PC-9 (cell line): ENCODE measurements at regions of chr2 and their contacts with region 1.

Region 1: GRCh38 chr2:235827585-235827992 is 333.7 kb downstream of the AGAP1 start:
- DNase-seq: peak; percentile 83 to 87
- H3K4me3 ChIP-seq: no peak overlapping the region
- H3K27ac ChIP-seq: peak overlapping the region; percentile 41
- H3K4me1 ChIP-seq: peaks cover 17% of the 10 kb centered on the region
- H3K27me3 ChIP-seq: no peaks in the 10 kb centered on the region
- CTCF ChIP-seq: no peak

Region 2: GRCh38 chr2:234469251-234469845 is 1358.2 kb before region 1 on chr2:
- CTCF ChIA-PET with region 1: no interaction called
- POLR2A ChIA-PET with region 1: interaction called, 12 read pairs
- intact Hi-C with region 1: no loop called
- DNase-seq: peak in 1 of 2 experiments; percentile 48
- H3K4me3 ChIP-seq: no peak overlapping the region
- H3K27ac ChIP-seq: no peak overlapping the region
- H3K4me1 ChIP-seq: peaks cover 17% of the 10 kb centered on the region
- H3K27me3 ChIP-seq: no peaks in the 10 kb centered on the region
- CTCF ChIP-seq: no peak

Region 3: DNA sequence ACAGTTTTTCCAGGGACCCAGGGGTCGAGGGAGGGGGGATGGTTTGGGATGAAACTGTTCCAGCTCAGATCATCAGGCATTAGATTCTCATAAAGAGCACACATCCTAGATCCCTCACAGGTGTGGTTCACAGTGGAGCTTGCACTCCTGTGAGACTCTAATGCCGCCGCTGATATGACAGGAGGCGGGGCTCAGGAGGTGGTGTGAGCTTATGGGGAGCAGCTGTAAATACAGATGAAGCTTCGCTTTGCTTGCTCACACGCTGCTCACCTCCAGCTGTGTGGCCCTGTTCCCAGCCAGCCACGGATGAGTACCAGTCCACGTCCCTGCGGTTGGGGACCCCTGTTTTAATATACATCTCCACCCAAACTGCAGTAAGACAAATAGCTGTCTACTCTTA is 129.6 kb before region 1 on chr2:
- CTCF ChIA-PET with region 1: no interaction called
- POLR2A ChIA-PET with region 1: no interaction called
- intact Hi-C with region 1: no loop called
- DNase-seq: no peak
- H3K4me3 ChIP-seq: no peak overlapping the region
- H3K27ac ChIP-seq: 0 out of 2 replicates have a peak overlapping the region, but pooled peaks have one; percentile 31
- H3K4me1 ChIP-seq: peaks cover 18% of the 10 kb centered on the region
- H3K27me3 ChIP-seq: no peaks in the 10 kb centered on the region
- CTCF ChIP-seq: no peak